ENCODE measurements at regions of chr16 and their contacts with region 1.

Region 1: DNA sequence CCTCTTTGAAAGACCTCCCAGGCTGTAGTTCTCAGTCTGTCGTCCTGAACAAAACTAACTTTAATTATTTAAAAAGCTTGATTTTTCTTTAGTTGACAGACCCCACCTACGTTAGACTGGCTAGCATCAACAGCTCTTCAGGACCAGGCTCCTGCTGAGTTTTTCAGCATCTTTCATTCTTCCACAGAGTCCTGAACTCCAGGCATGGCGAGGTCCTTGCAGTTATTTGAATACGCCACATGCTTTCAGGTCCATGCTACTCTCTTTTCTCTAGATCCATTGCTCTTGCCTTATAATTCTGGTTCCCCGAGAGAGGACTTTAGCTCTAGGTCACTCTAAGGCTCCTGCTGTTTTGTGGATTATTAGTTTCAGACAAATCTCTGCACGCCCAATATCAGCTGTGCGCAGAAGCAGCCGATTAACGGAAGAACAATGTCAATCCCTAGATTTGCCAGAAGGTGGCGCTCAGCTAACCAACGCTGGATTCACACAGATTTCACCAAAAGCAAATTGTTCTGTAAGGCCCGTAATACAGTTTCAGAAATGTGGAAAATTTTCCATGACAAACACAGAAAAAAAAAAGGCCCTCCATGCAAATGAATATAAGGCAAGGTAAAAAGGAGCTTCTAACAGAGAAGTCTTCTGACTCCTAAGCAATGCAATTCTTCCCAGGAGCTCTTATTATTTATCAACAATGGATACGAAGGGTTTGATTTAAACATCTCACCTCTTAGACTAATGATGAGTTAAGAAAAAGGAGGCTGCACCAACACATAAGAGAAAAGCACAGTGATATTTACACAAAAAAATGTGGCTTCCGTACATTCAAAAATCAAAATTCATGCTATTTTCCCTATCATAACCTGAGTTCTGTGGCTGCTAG is 33.5 kb upstream of the BCO1 start:
- DNase-seq: no peak
- ATAC-seq: no peak
- H3K4me3 Mint-ChIP-seq: no peak overlapping the region
- H3K27ac Mint-ChIP-seq: no peak overlapping the region
- H3K4me1 Mint-ChIP-seq: no peaks in the 10 kb centered on the region
- H3K27me3 Mint-ChIP-seq: peaks cover 26% of the 10 kb centered on the region

Region 2: GRCh38 chr16:81170824-81171223 is 34.2 kb before region 1 on chr16:
- CTCF ChIA-PET with region 1: no interaction called
- DNase-seq: no peak
- ATAC-seq: no peak
- H3K4me3 Mint-ChIP-seq: no peak overlapping the region
- H3K27ac Mint-ChIP-seq: no peak overlapping the region
- H3K4me1 Mint-ChIP-seq: no peaks in the 10 kb centered on the region
- H3K27me3 Mint-ChIP-seq: no peaks in the 10 kb centered on the region

Region 3: GRCh38 chr16:81216706-81217105 is 11.7 kb after region 1 on chr16:
- CTCF ChIA-PET with region 1: interaction called, 14 read pairs
- DNase-seq: no peak
- ATAC-seq: no peak
- H3K4me3 Mint-ChIP-seq: no peak overlapping the region
- H3K27ac Mint-ChIP-seq: no peak overlapping the region
- H3K4me1 Mint-ChIP-seq: no peaks in the 10 kb centered on the region
- H3K27me3 Mint-ChIP-seq: peaks cover 4% of the 10 kb centered on the region

Region 4: DNA sequence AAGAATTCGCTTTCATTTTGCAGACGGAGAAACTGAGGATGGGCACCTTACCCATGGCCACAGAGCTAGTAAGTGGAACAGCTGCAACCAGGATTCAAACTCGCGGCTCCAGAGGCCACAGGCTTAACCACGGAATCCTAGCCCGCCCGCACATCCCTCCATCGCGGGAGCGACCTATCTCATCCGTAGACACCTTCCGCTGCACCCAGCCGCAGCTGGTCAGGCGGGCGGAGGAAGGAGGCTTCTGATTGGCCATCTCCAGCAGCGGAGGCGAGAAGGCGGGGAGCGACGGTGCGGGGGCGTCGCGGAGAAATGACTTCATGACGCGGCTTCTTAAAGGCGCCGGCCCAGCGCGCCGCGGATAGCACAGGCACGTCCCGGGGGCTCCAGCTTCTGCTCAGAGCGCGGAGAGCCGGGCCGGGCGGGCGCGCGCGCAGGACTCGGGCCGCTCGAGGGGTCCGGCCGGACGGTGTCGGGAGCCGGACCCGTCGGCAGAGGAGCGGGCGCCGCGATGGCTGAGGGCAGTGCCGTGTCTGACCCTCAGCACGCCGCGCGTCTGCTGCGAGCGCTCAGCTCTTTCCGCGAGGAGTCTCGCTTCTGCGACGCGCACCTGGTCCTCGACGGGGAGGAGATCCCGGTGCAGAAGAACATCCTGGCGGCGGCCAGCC is 109.7 kb after region 1 on chr16 and contains the start of gene GAN:
- CTCF ChIA-PET with region 1: interaction called, 10 read pairs
- DNase-seq: peak; percentile 98
- ATAC-seq: peak; percentile 96
- H3K4me3 Mint-ChIP-seq: peak within 1 kb of the TSS; percentile 94
- H3K27ac Mint-ChIP-seq: peak within 1 kb of the TSS; percentile 92
- H3K4me1 Mint-ChIP-seq: peaks cover 39% of the 10 kb centered on the region
- H3K27me3 Mint-ChIP-seq: no peaks in the 10 kb centered on the region
- total RNA-seq, gene GAN: 8.1 to 10.3 TPM